ENCODE measurements at regions of chr1 and their contacts with region 1.

Region 1: GRCh38 chr1:179714623-179715022 is 28.5 kb upstream of the FAM163A start:
- DNase-seq: no peak
- ATAC-seq: no peak
- H3K4me3 ChIP-seq: no peak overlapping the region
- H3K27ac ChIP-seq: no peak overlapping the region
- H3K4me1 ChIP-seq: peaks cover 0 to 13% (median 10%) of the 10 kb centered on the region in 9 donors
- H3K27me3 ChIP-seq: no peaks in the 10 kb centered on the region
- CTCF ChIP-seq: no peak

Region 2: GRCh38 chr1:179663810-179664209 is 50.8 kb before region 1 on chr1:
- intact Hi-C with region 1: no loop called
- DNase-seq: no peak
- ATAC-seq: no peak
- H3K4me3 ChIP-seq: no peak overlapping the region
- H3K27ac ChIP-seq: no peak overlapping the region
- H3K4me1 ChIP-seq: peaks cover 0 to 4% (median 0%) of the 10 kb centered on the region in 9 donors
- H3K27me3 ChIP-seq: no peaks in the 10 kb centered on the region
- CTCF ChIP-seq: no peak

Region 3: GRCh38 chr1:179754042-179754624 is 39.5 kb after region 1 on chr1:
- intact Hi-C with region 1: no loop called
- DNase-seq: no peak
- ATAC-seq: peak in 1 of 8 donors; percentile 37
- H3K4me3 ChIP-seq: no peak overlapping the region
- H3K27ac ChIP-seq: no peak overlapping the region
- H3K4me1 ChIP-seq: no peaks in the 10 kb centered on the region
- H3K27me3 ChIP-seq: no peaks in the 10 kb centered on the region
- CTCF ChIP-seq: no peak

Region 4: DNA sequence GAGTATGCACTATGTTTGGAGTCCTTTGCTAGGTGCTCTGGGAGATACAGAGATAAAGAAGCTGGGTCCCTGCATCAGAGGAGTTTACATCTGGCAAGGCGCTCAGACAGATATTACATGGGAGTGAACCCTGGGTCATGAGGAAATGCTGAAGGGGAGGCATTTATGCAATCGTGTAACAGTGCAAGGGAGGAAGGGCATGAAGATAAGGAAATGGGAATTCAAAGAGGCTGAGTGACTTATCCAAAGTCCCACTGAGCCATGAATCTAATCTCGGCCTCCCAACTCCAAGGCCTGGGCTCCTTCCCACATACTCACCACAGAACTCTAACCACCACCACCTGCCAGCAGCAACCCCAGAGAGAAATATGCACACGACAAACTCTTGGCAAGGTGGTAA is 80.0 kb after region 1 on chr1:
- intact Hi-C with region 1: loop called in 1 of 10 experiments (anchors 5 kb)
- DNase-seq: no peak
- ATAC-seq: peak in 5 of 8 donors; percentile 19 to 82 (median 47)
- H3K4me3 ChIP-seq: no peak overlapping the region
- H3K27ac ChIP-seq: no peak overlapping the region
- H3K4me1 ChIP-seq: peaks cover 0 to 15% (median 12%) of the 10 kb centered on the region in 9 donors
- H3K27me3 ChIP-seq: no peaks in the 10 kb centered on the region
- CTCF ChIP-seq: no peak

Region 5: GRCh38 chr1:179976970-179977651 is 262.5 kb after region 1 on chr1:
- intact Hi-C with region 1: no loop called
- DNase-seq: no peak
- ATAC-seq: peak in 5 of 8 donors; percentile 35 to 62 (median 42)
- H3K4me3 ChIP-seq: no peak overlapping the region
- H3K27ac ChIP-seq: peak overlapping the region in 2 of 10 donors; percentile 13 to 22
- H3K4me1 ChIP-seq: peaks cover 0 to 51% (median 38%) of the 10 kb centered on the region in 9 donors
- H3K27me3 ChIP-seq: no peaks in the 10 kb centered on the region
- CTCF ChIP-seq: no peak

Region 6: DNA sequence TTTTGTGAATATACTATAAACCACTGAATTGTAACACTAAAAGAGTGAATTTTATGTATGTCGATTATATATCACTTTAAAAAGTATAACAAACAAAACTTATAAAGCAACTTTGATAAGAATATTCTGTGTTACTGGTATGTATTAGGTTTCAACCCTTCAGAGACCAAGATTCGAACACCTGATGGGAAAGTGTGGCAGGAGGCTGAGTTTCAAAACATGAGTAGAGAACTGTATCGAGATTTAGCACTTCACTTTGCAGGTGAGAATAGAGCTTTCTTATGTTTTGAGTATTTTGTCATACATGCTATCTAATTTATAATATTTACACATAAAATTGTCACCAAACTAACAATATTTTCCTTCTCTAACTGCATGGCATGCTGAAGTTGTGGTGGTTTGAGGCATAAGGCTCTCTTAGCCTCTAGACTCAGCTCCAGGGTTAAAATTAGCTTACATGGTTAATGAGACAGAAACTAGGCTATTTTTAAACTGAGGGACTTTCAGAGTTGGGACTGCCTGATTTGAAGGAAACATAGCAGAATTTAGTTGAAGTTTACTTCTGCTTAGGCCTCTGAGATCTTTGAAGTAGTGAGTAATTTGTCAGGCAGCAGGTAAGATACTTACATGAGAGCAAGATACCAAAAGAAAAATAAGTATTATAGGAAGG is 288.5 kb after region 1 on chr1:
- intact Hi-C with region 1: no loop called
- DNase-seq: no peak
- ATAC-seq: peak in 2 of 8 donors; percentile 61 to 70
- H3K4me3 ChIP-seq: no peak overlapping the region
- H3K27ac ChIP-seq: peak overlapping the region in 3 of 10 donors; percentile 5 to 22 (median 11)
- H3K4me1 ChIP-seq: peaks cover 0 to 23% (median 14%) of the 10 kb centered on the region in 9 donors
- H3K27me3 ChIP-seq: no peaks in the 10 kb centered on the region
- CTCF ChIP-seq: no peak

Measured in heart right ventricle (tissue), 16 donors.